CD4-positive, alpha-beta T cell (primary cell): ENCODE measurements at regions of chr5 and their contacts with region 1.

Region 1: DNA sequence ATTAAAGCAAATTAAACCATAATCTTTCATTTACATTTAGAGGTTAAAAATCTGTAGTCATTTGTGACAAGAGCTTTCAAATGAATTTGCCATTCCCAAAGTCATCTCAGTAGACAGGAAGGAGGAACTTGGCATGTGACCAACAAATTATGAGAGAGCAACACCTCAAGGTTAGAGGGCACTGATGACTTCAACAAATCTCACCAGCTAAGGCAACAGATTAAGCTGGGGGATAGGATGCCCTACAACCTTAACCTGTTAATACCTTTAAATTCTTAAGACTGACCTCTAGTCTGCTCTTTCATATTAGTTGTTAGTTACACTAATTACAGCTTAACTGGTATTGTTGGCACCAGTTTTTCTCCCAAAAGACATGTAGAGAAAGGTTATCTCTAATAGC is 18.4 kb downstream of the POU5F2 start:
- DNase-seq: peak in 1 of 14 experiments; percentile 1
- ATAC-seq: no peak
- H3K4me3 ChIP-seq: no peak overlapping the region
- H3K4me3 Mint-ChIP-seq: no peak overlapping the region
- H3K27ac ChIP-seq: no peak overlapping the region
- H3K27ac Mint-ChIP-seq: no peak overlapping the region
- H3K4me1 ChIP-seq: no peaks in the 10 kb centered on the region
- H3K4me1 Mint-ChIP-seq: peaks cover 31% of the 10 kb centered on the region
- H3K27me3 ChIP-seq: no peaks in the 10 kb centered on the region
- H3K27me3 Mint-ChIP-seq: no peaks in the 10 kb centered on the region
- CTCF ChIP-seq: no peak

Region 2: GRCh38 chr5:91977579-91977978 is 1745.4 kb before region 1 on chr5:
- CTCF ChIA-PET with region 1: no interaction called
- POLR2A ChIA-PET with region 1: no interaction called
- intact Hi-C with region 1: no loop called
- DNase-seq: no peak
- ATAC-seq: no peak
- H3K4me3 ChIP-seq: no peak overlapping the region
- H3K4me3 Mint-ChIP-seq: no peak overlapping the region
- H3K27ac ChIP-seq: no peak overlapping the region
- H3K27ac Mint-ChIP-seq: no peak overlapping the region
- H3K4me1 ChIP-seq: no peaks in the 10 kb centered on the region
- H3K4me1 Mint-ChIP-seq: no peaks in the 10 kb centered on the region
- H3K27me3 ChIP-seq: no peaks in the 10 kb centered on the region
- H3K27me3 Mint-ChIP-seq: no peaks in the 10 kb centered on the region
- CTCF ChIP-seq: no peak

Region 3: GRCh38 chr5:93532370-93532769 is 190.6 kb before region 1 on chr5:
- CTCF ChIA-PET with region 1: no interaction called
- POLR2A ChIA-PET with region 1: no interaction called
- intact Hi-C with region 1: no loop called
- DNase-seq: no peak
- ATAC-seq: no peak
- H3K4me3 ChIP-seq: no peak overlapping the region
- H3K4me3 Mint-ChIP-seq: no peak overlapping the region
- H3K27ac ChIP-seq: no peak overlapping the region
- H3K27ac Mint-ChIP-seq: no peak overlapping the region
- H3K4me1 ChIP-seq: no peaks in the 10 kb centered on the region
- H3K4me1 Mint-ChIP-seq: no peaks in the 10 kb centered on the region
- H3K27me3 ChIP-seq: no peaks in the 10 kb centered on the region
- H3K27me3 Mint-ChIP-seq: peaks cover 10% of the 10 kb centered on the region
- CTCF ChIP-seq: no peak

Region 4: GRCh38 chr5:94161801-94162200 is 438.8 kb after region 1 on chr5:
- CTCF ChIA-PET with region 1: no interaction called
- POLR2A ChIA-PET with region 1: no interaction called
- intact Hi-C with region 1: no loop called
- DNase-seq: no peak
- ATAC-seq: no peak
- H3K4me3 ChIP-seq: no peak overlapping the region
- H3K4me3 Mint-ChIP-seq: no peak overlapping the region
- H3K27ac ChIP-seq: no peak overlapping the region
- H3K27ac Mint-ChIP-seq: no peak overlapping the region
- H3K4me1 ChIP-seq: no peaks in the 10 kb centered on the region
- H3K4me1 Mint-ChIP-seq: no peaks in the 10 kb centered on the region
- H3K27me3 ChIP-seq: no peaks in the 10 kb centered on the region
- H3K27me3 Mint-ChIP-seq: no peaks in the 10 kb centered on the region
- CTCF ChIP-seq: no peak

Region 5: GRCh38 chr5:94613583-94613982 is 890.6 kb after region 1 on chr5:
- CTCF ChIA-PET with region 1: no interaction called
- POLR2A ChIA-PET with region 1: no interaction called
- intact Hi-C with region 1: loop called in 1 of 2 experiments (anchors 10 kb)
- DNase-seq: peak in 3 of 14 experiments; percentile 15 to 31 (median 20)
- ATAC-seq: no peak
- H3K4me3 ChIP-seq: no peak overlapping the region
- H3K4me3 Mint-ChIP-seq: no peak overlapping the region
- H3K27ac ChIP-seq: no peak overlapping the region
- H3K27ac Mint-ChIP-seq: no peak overlapping the region
- H3K4me1 ChIP-seq: peaks cover 8% of the 10 kb centered on the region
- H3K4me1 Mint-ChIP-seq: peaks cover 24% of the 10 kb centered on the region
- H3K27me3 ChIP-seq: no peaks in the 10 kb centered on the region
- H3K27me3 Mint-ChIP-seq: no peaks in the 10 kb centered on the region
- CTCF ChIP-seq: no peak